ENCODE measurements at regions of chr2 and their contacts with region 1.

Region 1: DNA sequence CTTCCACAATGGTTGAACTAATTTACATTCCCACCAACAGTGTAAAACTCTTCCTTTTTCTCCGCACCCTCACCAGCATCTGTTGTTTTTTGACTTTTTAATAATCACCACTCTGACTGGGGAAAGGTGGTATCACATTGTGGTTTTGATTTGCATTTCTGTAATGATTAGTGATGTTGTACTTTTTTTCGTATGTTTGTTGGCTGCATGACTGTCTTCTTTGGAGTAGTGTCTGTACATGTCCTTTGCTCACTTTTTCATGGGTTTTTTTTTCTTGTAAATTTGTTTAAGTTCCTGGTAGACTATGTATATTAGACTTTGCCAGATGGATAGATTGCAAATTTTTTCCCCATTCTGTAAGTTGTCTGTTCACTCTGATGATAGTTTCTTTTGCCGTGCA is 574.8 kb downstream of the KCNJ3 start:
- DNase-seq: no peak
- H3K4me3 ChIP-seq: no peak overlapping the region
- H3K27ac ChIP-seq: no peak overlapping the region
- H3K4me1 ChIP-seq: no peaks in the 10 kb centered on the region
- H3K27me3 ChIP-seq: no peaks in the 10 kb centered on the region
- CTCF ChIP-seq: no peak
- EP300 ChIP-seq: no peak
- POLR2A ChIP-seq: no peak

Region 2: GRCh38 chr2:153567367-153567766 is 1706.0 kb before region 1 on chr2:
- intact Hi-C with region 1: loop called in 1 of 4 experiments (anchors 10 kb)
- DNase-seq: no peak
- H3K4me3 ChIP-seq: no peak overlapping the region
- H3K27ac ChIP-seq: no peak overlapping the region
- H3K4me1 ChIP-seq: no peaks in the 10 kb centered on the region
- H3K27me3 ChIP-seq: no peaks in the 10 kb centered on the region
- CTCF ChIP-seq: no peak
- EP300 ChIP-seq: no peak
- POLR2A ChIP-seq: no peak

Region 3: GRCh38 chr2:154439156-154439555 is 834.2 kb before region 1 on chr2:
- intact Hi-C with region 1: no loop called
- DNase-seq: no peak
- H3K4me3 ChIP-seq: no peak overlapping the region
- H3K27ac ChIP-seq: no peak overlapping the region
- H3K4me1 ChIP-seq: no peaks in the 10 kb centered on the region
- H3K27me3 ChIP-seq: no peaks in the 10 kb centered on the region
- CTCF ChIP-seq: no peak
- EP300 ChIP-seq: no peak
- POLR2A ChIP-seq: no peak

Region 4: DNA sequence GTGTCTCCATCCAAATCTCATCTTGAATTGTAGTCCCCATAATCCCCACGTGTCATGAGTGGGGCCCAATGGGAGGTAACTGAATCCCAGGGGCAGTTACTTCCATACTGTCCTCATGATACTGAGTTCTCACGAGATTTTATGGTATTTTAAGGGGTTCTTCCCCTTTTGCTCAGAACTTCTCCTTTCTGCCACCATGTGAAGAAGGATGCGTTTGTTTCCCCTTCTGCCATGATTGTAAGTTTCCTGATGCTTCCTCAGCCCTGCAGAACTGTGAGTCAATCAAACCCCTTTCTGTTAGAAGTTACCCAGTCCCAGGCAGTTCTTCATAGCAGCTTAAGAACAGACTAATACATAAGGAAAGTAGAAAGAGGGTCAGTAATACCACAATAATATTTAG is 94.4 kb before region 1 on chr2:
- intact Hi-C with region 1: no loop called
- DNase-seq: no peak
- H3K4me3 ChIP-seq: no peak overlapping the region
- H3K27ac ChIP-seq: no peak overlapping the region
- H3K4me1 ChIP-seq: no peaks in the 10 kb centered on the region
- H3K27me3 ChIP-seq: no peaks in the 10 kb centered on the region
- CTCF ChIP-seq: no peak
- EP300 ChIP-seq: no peak
- POLR2A ChIP-seq: no peak

Region 5: DNA sequence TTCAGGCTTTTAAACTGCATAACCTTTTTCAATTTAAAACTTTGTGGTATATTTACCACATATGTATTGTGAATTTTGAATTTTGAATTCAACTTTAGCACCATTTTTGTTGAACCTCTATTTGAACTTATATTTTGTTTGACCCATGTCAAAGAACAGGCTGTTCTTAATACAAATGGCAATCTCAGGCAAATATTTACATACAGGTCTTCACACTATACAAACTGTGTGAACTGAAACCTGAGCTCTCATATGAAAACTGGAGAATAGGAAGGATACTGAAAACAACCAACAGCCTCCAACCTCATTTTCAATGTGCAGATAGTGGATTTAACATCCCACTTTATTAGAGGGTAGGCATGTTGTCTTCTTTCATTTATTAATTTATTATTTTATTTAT is 83.0 kb before region 1 on chr2:
- intact Hi-C with region 1: no loop called
- DNase-seq: no peak
- H3K4me3 ChIP-seq: no peak overlapping the region
- H3K27ac ChIP-seq: no peak overlapping the region
- H3K4me1 ChIP-seq: no peaks in the 10 kb centered on the region
- H3K27me3 ChIP-seq: no peaks in the 10 kb centered on the region
- CTCF ChIP-seq: no peak
- EP300 ChIP-seq: no peak
- POLR2A ChIP-seq: no peak

Region 6: GRCh38 chr2:155218945-155219344 is 54.4 kb before region 1 on chr2:
- intact Hi-C with region 1: no loop called
- DNase-seq: no peak
- H3K4me3 ChIP-seq: no peak overlapping the region
- H3K27ac ChIP-seq: no peak overlapping the region
- H3K4me1 ChIP-seq: no peaks in the 10 kb centered on the region
- H3K27me3 ChIP-seq: no peaks in the 10 kb centered on the region
- CTCF ChIP-seq: no peak
- EP300 ChIP-seq: no peak
- POLR2A ChIP-seq: no peak

Measured in ovary (tissue), 10 donors.